ENCODE measurements at regions of chr17 and their contacts with region 1.

Region 1: GRCh38 chr17:7818746-7819645 is 15.0 kb upstream of the KDM6B start:
- DNase-seq: no peak
- H3K4me3 ChIP-seq: no peak overlapping the region
- H3K27ac ChIP-seq: no peak overlapping the region
- H3K4me1 ChIP-seq: peaks cover 0 to 4% (median 0%) of the 10 kb centered on the region in 3 donors
- H3K27me3 ChIP-seq: peaks cover 0 to 10% (median 0%) of the 10 kb centered on the region in 4 donors
- CTCF ChIP-seq: no peak
- POLR2A ChIP-seq: no peak

Region 2: DNA sequence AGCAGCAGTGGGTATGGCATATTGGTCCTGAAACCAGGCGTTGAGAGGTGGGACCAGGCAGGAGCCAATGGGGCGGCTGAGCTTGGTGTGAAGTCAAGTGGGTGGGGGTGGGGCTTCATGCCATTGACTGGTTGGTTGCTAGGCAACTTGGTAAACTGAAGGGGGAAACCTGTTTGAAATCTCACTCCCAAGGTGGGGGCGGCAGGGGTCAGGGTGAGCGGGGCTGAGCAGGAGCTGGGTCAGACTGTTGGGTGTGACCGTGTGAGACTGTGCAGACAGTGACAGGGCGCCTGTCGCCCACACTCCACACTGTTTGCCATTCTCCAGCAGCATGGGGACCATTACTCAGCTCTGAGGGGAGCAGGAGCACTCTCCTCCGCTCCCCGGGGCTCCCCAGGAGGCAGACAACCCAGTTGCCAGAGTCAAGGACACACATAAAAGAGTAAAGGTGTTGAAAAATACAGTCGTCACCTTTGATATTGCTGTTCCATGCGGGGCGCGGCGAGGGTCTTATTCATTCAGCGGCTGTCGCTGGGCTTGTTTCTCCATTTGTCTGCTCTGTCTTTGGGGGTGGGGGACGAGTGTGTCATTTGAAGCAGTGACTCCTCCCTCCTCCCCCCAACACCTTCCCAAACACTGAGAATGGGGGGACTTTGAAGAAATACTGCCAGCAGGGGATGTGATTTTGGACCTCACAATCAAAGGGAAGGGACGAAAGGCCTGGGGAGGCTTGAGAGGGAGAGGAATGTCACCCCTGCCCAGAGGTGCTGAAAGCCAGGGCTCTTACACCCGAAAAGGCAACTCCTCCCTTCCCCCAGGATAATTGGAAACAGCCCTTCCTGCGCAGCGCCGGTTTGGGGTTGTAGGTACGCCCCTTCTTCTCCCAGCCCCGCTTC is 115.2 kb before region 1 on chr17:
- intact Hi-C with region 1: no loop called
- DNase-seq: no peak
- H3K4me3 ChIP-seq: peak overlapping the region in 2 of 4 donors; percentile 49 to 69
- H3K27ac ChIP-seq: no peak overlapping the region
- H3K4me1 ChIP-seq: peaks cover 19 to 28% (median 20%) of the 10 kb centered on the region in 3 donors
- H3K27me3 ChIP-seq: peaks cover 0 to 67% (median 10%) of the 10 kb centered on the region in 4 donors
- CTCF ChIP-seq: no peak
- POLR2A ChIP-seq: no peak

Region 3: GRCh38 chr17:7745748-7746470 is 73.1 kb before region 1 on chr17:
- intact Hi-C with region 1: loop called (anchors 10 kb)
- DNase-seq: no peak
- H3K4me3 ChIP-seq: no peak overlapping the region
- H3K27ac ChIP-seq: no peak overlapping the region
- H3K4me1 ChIP-seq: peaks cover 0 to 11% (median 0%) of the 10 kb centered on the region in 3 donors
- H3K27me3 ChIP-seq: peaks cover 0 to 18% (median 0%) of the 10 kb centered on the region in 4 donors
- CTCF ChIP-seq: no peak
- POLR2A ChIP-seq: no peak

Measured in esophagus squamous epithelium (tissue), 5 donors.